CD4-positive, alpha-beta T cell (primary cell): ENCODE measurements at regions of chr10 and their contacts with region 1.

Region 1: GRCh38 chr10:83153714-83154113 is 985.6 kb upstream of the GHITM start:
- DNase-seq: no peak
- ATAC-seq: no peak
- H3K4me3 ChIP-seq: no peak overlapping the region
- H3K4me3 Mint-ChIP-seq: no peak overlapping the region
- H3K27ac ChIP-seq: no peak overlapping the region
- H3K27ac Mint-ChIP-seq: no peak overlapping the region
- H3K4me1 ChIP-seq: no peaks in the 10 kb centered on the region
- H3K4me1 Mint-ChIP-seq: no peaks in the 10 kb centered on the region
- H3K27me3 ChIP-seq: no peaks in the 10 kb centered on the region
- H3K27me3 Mint-ChIP-seq: no peaks in the 10 kb centered on the region
- CTCF ChIP-seq: no peak

Region 2: DNA sequence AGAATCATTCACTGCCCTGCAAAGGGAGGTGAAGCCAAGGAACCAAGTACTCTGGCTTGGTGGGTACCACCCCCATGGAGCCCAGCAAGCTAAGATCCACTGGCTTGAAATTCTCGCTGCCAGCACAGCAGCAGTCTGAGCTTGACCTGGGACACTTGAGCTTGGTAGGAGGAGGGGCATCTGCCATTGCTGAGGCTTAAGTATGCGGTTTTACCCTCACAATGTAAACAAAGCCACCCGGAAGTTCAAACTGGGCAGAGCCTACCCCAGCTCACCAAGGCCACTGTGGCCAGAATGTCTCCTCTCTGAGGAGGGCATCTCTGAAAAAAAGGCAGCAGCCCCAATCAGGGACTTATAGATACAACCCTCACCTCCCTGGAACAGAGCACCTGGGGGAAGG is 64.4 kb before region 1 on chr10:
- CTCF ChIA-PET with region 1: no interaction called
- POLR2A ChIA-PET with region 1: no interaction called
- intact Hi-C with region 1: loop called in 1 of 2 experiments (anchors 10 kb)
- DNase-seq: no peak
- ATAC-seq: no peak
- H3K4me3 ChIP-seq: no peak overlapping the region
- H3K4me3 Mint-ChIP-seq: no peak overlapping the region
- H3K27ac ChIP-seq: no peak overlapping the region
- H3K27ac Mint-ChIP-seq: no peak overlapping the region
- H3K4me1 ChIP-seq: no peaks in the 10 kb centered on the region
- H3K4me1 Mint-ChIP-seq: no peaks in the 10 kb centered on the region
- H3K27me3 ChIP-seq: no peaks in the 10 kb centered on the region
- H3K27me3 Mint-ChIP-seq: no peaks in the 10 kb centered on the region
- CTCF ChIP-seq: no peak

Region 3: DNA sequence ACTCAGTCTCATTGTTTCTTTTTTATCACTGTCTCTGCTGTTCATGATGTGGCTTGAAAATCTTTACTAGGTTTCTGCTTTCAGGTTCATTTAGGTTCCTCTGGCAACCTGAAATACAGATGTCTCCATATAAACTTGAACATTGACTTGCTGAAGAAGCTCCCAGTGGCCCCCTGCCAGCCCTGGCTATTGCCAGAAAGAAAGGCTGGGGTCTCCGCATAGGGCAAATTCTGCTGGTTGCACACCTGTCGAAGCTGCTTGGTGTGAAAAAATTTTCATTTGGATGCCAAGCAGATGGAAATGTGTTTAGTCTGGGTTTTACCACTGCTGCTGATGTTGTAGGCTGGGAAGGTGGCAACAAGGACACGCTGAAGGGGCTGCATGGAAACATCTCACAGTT is 158.9 kb after region 1 on chr10:
- CTCF ChIA-PET with region 1: no interaction called
- POLR2A ChIA-PET with region 1: no interaction called
- intact Hi-C with region 1: no loop called
- DNase-seq: no peak
- ATAC-seq: no peak
- H3K4me3 ChIP-seq: no peak overlapping the region
- H3K4me3 Mint-ChIP-seq: no peak overlapping the region
- H3K27ac ChIP-seq: no peak overlapping the region
- H3K27ac Mint-ChIP-seq: no peak overlapping the region
- H3K4me1 ChIP-seq: no peaks in the 10 kb centered on the region
- H3K4me1 Mint-ChIP-seq: no peaks in the 10 kb centered on the region
- H3K27me3 ChIP-seq: no peaks in the 10 kb centered on the region
- H3K27me3 Mint-ChIP-seq: no peaks in the 10 kb centered on the region
- CTCF ChIP-seq: no peak